ENCODE measurements at regions of chr3 and their contacts with region 1.

Region 1: DNA sequence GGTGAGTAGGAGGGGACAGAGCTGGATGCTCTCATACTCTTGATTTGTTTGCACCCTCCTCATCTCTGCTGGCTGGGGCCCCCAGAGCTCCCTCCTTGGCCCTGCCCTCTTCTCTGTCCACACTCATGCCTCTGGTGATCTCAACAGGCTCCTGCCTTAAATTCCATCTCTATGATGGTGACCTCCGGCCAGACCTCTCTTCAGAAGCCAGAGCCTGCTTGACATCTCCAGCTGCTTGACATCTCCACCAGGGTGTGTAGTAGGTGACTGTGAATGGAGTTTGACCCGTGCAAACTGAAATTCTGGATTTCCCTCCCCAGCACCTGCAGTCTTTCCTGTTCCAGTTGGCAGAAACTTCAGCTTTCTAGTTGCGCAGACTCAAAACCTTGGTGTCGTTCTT is 4.3 kb upstream of the FGD5 start:
- DNase-seq: no peak
- H3K4me3 ChIP-seq: no peak overlapping the region
- H3K27ac ChIP-seq: no peak overlapping the region
- H3K4me1 ChIP-seq: peaks cover 3 to 52% (median 30%) of the 10 kb centered on the region in 4 experiments
- H3K27me3 ChIP-seq: peaks cover 0 to 2% (median 0%) of the 10 kb centered on the region in 5 experiments

Region 2: DNA sequence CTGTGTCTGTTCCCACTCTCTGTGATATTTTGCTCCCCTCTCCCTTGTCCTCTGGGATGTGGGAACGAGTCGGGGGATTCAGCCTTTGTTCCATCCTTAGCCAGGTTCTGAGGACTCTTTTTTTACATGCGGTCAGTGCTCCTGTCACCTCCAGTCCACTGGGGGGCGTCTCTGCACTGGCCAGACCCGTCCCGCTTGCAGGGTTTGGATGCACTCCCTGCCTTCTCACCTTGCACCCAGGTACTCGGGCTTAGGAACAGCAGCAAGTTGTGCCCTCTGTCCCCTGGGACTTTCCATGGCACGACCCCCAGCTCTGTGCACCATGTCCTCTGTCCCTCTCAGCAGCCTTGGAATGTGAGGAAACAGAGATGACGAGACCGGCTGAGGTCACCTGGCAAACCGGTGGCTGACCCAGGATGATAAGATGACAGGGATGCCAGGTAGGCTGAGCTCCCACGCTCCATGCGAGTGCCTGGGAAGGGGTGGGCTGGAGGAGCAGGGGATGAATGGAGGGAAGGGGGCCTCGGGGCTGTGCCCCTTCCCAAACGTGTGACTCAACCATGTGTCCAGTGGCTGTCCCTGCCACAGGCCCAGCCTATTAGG is 23.0 kb before region 1 on chr3:
- CTCF ChIA-PET with region 1: interaction called, 28 read pairs
- POLR2A ChIA-PET with region 1: interaction called, 3 read pairs
- DNase-seq: peak; percentile 61 to 77 (median 74)
- H3K4me3 ChIP-seq: no peak overlapping the region
- H3K27ac ChIP-seq: no peak overlapping the region
- H3K4me1 ChIP-seq: peaks cover 0 to 11% (median 3%) of the 10 kb centered on the region in 4 experiments
- H3K27me3 ChIP-seq: no peaks in the 10 kb centered on the region

Region 3: DNA sequence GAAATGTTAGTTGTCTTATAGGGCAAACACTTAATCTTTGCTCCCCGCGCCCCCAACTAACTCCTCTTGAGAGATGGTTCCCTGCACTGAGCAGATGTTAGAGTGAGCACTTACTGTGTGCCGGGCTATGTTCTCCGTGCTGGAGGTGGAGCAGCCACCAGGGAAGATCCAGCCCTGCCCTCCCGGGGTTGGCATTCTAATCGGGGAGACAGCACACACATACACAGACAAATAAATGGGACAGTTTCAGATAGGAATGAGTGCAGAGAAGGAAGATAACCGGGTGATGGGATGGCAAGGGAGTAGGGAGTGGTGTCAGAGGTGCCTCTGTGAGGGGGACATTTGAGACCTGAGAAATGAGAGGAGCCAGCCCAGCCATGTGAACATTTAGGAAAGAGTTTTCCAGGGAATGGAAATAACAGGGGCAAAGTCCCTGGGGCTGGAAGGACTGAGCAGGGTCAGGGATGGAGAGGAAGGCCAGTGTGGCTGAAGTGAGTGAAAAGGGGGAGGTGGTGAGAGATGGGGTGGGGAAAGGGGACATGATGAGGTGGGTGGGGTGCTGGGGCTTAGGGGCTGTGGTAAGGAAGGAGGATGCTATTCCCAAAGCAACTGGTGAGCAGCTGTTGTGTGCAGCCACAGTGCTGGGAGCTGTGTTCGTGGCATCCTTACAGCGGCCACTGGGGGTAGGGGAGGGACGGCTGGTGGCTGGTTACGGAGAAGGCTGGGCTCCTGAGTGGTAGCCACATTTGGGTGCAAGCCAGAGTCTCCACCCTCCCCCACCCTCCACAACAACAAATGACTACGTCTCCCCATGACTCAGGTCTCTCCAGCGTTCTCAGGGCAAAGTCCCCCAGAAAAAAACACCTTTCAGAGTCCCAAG is 11.1 kb before region 1 on chr3:
- CTCF ChIA-PET with region 1: interaction called, 11 read pairs
- POLR2A ChIA-PET with region 1: no interaction called
- DNase-seq: peak; percentile 71 to 92 (median 82)
- H3K4me3 ChIP-seq: peak overlapping the region in 1 of 7 experiments; percentile 3
- H3K27ac ChIP-seq: peak overlapping the region in 1 of 2 experiments; percentile 26
- H3K4me1 ChIP-seq: peaks cover 0 to 37% (median 34%) of the 10 kb centered on the region in 4 experiments
- H3K27me3 ChIP-seq: no peaks in the 10 kb centered on the region

Region 4: GRCh38 chr3:14947100-14947885 is 132.8 kb after region 1 on chr3 and contains the start of gene NR2C2:
- CTCF ChIA-PET with region 1: no interaction called
- POLR2A ChIA-PET with region 1: no interaction called
- DNase-seq: peak; percentile 77 to 92 (median 87)
- H3K4me3 ChIP-seq: peak within 1 kb of the TSS; percentile 79 to 94 (median 86)
- H3K27ac ChIP-seq: peak within 1 kb of the TSS; percentile 95 to 98
- H3K4me1 ChIP-seq: peaks cover 27 to 43% (median 33%) of the 10 kb centered on the region in 4 experiments
- H3K27me3 ChIP-seq: no peaks in the 10 kb centered on the region

Region 5: GRCh38 chr3:14957925-14958324 is 143.4 kb after region 1 on chr3:
- CTCF ChIA-PET with region 1: no interaction called
- POLR2A ChIA-PET with region 1: no interaction called
- DNase-seq: no peak
- H3K4me3 ChIP-seq: no peak overlapping the region
- H3K27ac ChIP-seq: no peak overlapping the region
- H3K4me1 ChIP-seq: peaks cover 0 to 18% (median 7%) of the 10 kb centered on the region in 4 experiments
- H3K27me3 ChIP-seq: no peaks in the 10 kb centered on the region

Measured in common myeloid progenitor, CD34-positive (primary cell).